Mammary epithelial cell (primary cell): ENCODE measurements at regions of chr20 and their contacts with region 1.

Region 1: DNA sequence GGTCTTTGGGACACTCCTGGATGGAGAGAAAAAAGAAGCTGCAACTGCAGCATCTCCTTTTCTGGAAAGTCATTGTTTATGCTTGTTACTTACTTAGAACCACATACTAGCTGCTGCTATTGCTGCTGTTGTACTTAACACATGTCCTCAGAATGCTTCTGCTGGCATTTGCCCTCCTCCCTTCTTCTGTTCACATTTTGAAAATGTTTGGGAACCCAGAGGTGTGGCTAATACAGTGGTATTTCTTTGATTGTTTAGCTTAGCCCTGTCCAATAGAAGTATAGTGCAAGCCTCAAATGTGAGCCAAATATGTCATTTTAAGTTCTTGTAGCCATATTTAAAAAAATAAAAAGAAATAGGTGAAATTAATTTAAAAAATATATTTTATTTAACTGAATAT is 8.4 kb downstream of the DTD1 start:
- DNase-seq: no peak
- H3K4me3 ChIP-seq: no peak overlapping the region
- H3K27ac ChIP-seq: no peak overlapping the region
- H3K4me1 ChIP-seq: no peaks in the 10 kb centered on the region
- H3K27me3 ChIP-seq: no peaks in the 10 kb centered on the region
- CTCF ChIP-seq: no peak

Region 2: GRCh38 chr20:17457588-17458190 is 1138.6 kb before region 1 on chr20:
- CTCF ChIA-PET with region 1: interaction called, 11 read pairs
- dilution Hi-C with region 1: no loop called
- in situ Hi-C with region 1: no loop called
- intact Hi-C with region 1: no loop called
- DNase-seq: no peak
- H3K4me3 ChIP-seq: no peak overlapping the region
- H3K27ac ChIP-seq: no peak overlapping the region
- H3K4me1 ChIP-seq: no peaks in the 10 kb centered on the region
- H3K27me3 ChIP-seq: no peaks in the 10 kb centered on the region
- CTCF ChIP-seq: no peak

Region 3: DNA sequence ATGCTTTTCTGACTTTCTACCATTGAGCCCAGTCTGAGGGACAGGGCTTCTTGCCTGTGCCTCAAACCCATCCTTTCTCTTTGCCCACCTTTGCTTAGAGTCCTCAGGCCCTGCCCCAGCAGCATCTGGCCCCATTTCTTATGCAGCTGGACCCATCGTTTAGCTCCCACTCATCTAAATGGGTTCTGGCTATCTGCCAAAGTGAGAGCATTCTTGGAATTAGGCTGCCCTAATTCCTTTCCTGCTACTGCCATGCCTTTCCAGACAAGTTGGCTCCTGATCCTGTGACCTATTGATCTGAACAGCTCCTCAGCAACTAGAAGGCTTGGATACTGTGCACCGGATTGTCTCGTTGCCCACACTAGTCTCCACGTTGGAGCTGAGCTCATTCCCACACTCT is 152.4 kb before region 1 on chr20:
- CTCF ChIA-PET with region 1: no interaction called
- dilution Hi-C with region 1: no loop called
- in situ Hi-C with region 1: no loop called
- intact Hi-C with region 1: no loop called
- DNase-seq: no peak
- H3K4me3 ChIP-seq: no peak overlapping the region
- H3K27ac ChIP-seq: no peak overlapping the region
- H3K4me1 ChIP-seq: no peaks in the 10 kb centered on the region
- H3K27me3 ChIP-seq: no peaks in the 10 kb centered on the region
- CTCF ChIP-seq: no peak